Natural killer cell (primary cell): ENCODE measurements at regions of chr17 and their contacts with region 1.

Region 1: GRCh38 chr17:32783602-32784001 is 93.3 kb downstream of the MYO1D start:
- DNase-seq: peak in 1 of 2 donors; percentile 70
- ATAC-seq: peak; percentile 70 to 75 (median 72)
- H3K4me3 ChIP-seq: no peak overlapping the region
- H3K4me3 Mint-ChIP-seq: no peak overlapping the region
- H3K27ac ChIP-seq: no peak overlapping the region
- H3K27ac Mint-ChIP-seq: no peak overlapping the region
- H3K4me1 ChIP-seq: no peaks in the 10 kb centered on the region
- H3K4me1 Mint-ChIP-seq: no peaks in the 10 kb centered on the region
- H3K27me3 ChIP-seq: no peaks in the 10 kb centered on the region
- H3K27me3 Mint-ChIP-seq: peaks cover 5 to 15% of the 10 kb centered on the region in 2 donors
- CTCF ChIP-seq: peak; percentile 90

Region 2: GRCh38 chr17:32732900-32733299 is 50.7 kb before region 1 on chr17:
- intact Hi-C with region 1: no loop called
- DNase-seq: no peak
- ATAC-seq: no peak
- H3K4me3 ChIP-seq: no peak overlapping the region
- H3K4me3 Mint-ChIP-seq: no peak overlapping the region
- H3K27ac ChIP-seq: no peak overlapping the region
- H3K27ac Mint-ChIP-seq: no peak overlapping the region
- H3K4me1 ChIP-seq: no peaks in the 10 kb centered on the region
- H3K4me1 Mint-ChIP-seq: no peaks in the 10 kb centered on the region
- H3K27me3 ChIP-seq: no peaks in the 10 kb centered on the region
- H3K27me3 Mint-ChIP-seq: no peaks in the 10 kb centered on the region
- CTCF ChIP-seq: no peak

Region 3: GRCh38 chr17:32877164-32877764 is 93.7 kb after region 1 on chr17:
- intact Hi-C with region 1: loop called (anchors 1 kb)
- DNase-seq: peak; percentile 91 to 97
- ATAC-seq: peak; percentile 90 to 96 (median 93)
- H3K4me3 ChIP-seq: peak overlapping the region; percentile 48
- H3K4me3 Mint-ChIP-seq: peak overlapping the region; percentile 80
- H3K27ac ChIP-seq: peak overlapping the region; percentile 84
- H3K27ac Mint-ChIP-seq: peak overlapping the region; percentile 67 to 84
- H3K4me1 ChIP-seq: peaks cover 17% of the 10 kb centered on the region
- H3K4me1 Mint-ChIP-seq: peaks cover 12 to 13% of the 10 kb centered on the region in 2 donors
- H3K27me3 ChIP-seq: no peaks in the 10 kb centered on the region
- H3K27me3 Mint-ChIP-seq: peaks cover 6 to 13% of the 10 kb centered on the region in 2 donors
- CTCF ChIP-seq: peak; percentile 80

Region 4: GRCh38 chr17:32909787-32910369 is 126.3 kb after region 1 on chr17:
- intact Hi-C with region 1: loop called (anchors 1 kb)
- DNase-seq: peak; percentile 42 to 68
- ATAC-seq: peak; percentile 70 to 99 (median 96)
- H3K4me3 ChIP-seq: no peak overlapping the region
- H3K4me3 Mint-ChIP-seq: no peak overlapping the region
- H3K27ac ChIP-seq: no peak overlapping the region
- H3K27ac Mint-ChIP-seq: no peak overlapping the region
- H3K4me1 ChIP-seq: no peaks in the 10 kb centered on the region
- H3K4me1 Mint-ChIP-seq: no peaks in the 10 kb centered on the region
- H3K27me3 ChIP-seq: no peaks in the 10 kb centered on the region
- H3K27me3 Mint-ChIP-seq: peaks cover 0 to 10% of the 10 kb centered on the region in 2 donors
- CTCF ChIP-seq: peak; percentile 76

Region 5: DNA sequence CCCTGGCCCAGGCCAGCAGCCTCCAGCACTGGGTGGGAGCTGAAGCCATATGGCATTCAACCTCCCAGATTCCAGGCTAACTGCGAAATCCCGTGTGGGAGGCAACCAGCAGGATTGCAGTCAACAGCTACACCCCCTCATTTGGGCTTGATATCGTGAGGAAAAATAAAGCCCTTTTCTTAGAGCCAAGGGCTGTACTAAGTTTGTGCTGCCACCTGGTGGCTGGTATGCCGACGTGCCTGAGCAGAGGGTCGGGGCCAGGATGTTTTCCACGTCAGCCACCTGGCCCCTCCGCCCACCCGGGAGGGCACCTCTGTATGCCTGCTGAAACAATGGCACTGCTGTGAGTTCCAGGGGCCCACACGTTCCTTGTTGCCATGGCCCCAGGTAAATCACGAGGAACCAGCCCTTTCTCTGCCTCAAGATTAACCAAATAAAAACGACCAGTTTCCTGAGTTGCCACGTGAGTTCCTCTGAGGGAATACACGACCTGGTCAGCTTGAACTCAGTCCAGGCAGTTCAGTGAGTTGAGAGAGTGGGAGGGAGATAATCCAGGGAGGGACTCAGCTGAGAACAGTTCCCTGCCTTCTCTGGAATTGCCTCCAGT is 153.4 kb after region 1 on chr17:
- intact Hi-C with region 1: loop called (anchors 1 kb)
- DNase-seq: peak; percentile 45 to 81
- ATAC-seq: peak; percentile 55 to 74 (median 62)
- H3K4me3 ChIP-seq: no peak overlapping the region
- H3K4me3 Mint-ChIP-seq: no peak overlapping the region
- H3K27ac ChIP-seq: no peak overlapping the region
- H3K27ac Mint-ChIP-seq: no peak overlapping the region
- H3K4me1 ChIP-seq: peaks cover 5% of the 10 kb centered on the region
- H3K4me1 Mint-ChIP-seq: peaks cover 0 to 6% of the 10 kb centered on the region in 2 donors
- H3K27me3 ChIP-seq: no peaks in the 10 kb centered on the region
- H3K27me3 Mint-ChIP-seq: peaks cover 10 to 12% of the 10 kb centered on the region in 2 donors
- CTCF ChIP-seq: peak; percentile 69

Region 6: GRCh38 chr17:32997753-32998632 is 214.4 kb after region 1 on chr17:
- intact Hi-C with region 1: loop called (anchors 1 kb)
- DNase-seq: peak; percentile 75 to 78
- ATAC-seq: peak; percentile 75 to 91 (median 77)
- H3K4me3 ChIP-seq: no peak overlapping the region
- H3K4me3 Mint-ChIP-seq: no peak overlapping the region
- H3K27ac ChIP-seq: no peak overlapping the region
- H3K27ac Mint-ChIP-seq: no peak overlapping the region
- H3K4me1 ChIP-seq: peaks cover 6% of the 10 kb centered on the region
- H3K4me1 Mint-ChIP-seq: peaks cover 5% of the 10 kb centered on the region in 2 donors
- H3K27me3 ChIP-seq: no peaks in the 10 kb centered on the region
- H3K27me3 Mint-ChIP-seq: peaks cover 9 to 22% of the 10 kb centered on the region in 2 donors
- CTCF ChIP-seq: peak; percentile 92